IMR-90 (cell line): ENCODE measurements at regions of chr14 and their contacts with region 1.

Region 1: DNA sequence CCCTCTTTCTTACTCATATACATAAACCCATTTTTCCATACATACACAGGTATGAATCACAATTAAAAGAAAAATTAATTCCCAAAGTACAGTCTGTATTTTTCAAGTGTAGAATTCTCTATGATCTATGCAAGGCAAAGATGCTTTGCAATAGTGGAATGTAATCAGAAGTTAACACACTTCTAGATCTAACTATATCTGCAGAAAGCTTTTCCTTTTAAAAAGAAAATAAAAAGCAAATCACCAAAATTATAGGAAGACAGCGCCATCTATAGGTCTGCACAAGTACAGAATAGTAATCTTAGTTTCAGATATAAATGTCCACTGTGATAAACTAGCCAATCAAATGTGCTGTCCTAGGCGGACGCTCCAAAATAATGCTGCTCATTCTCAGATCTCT is 22.0 kb downstream of the SLC25A21 start:
- DNase-seq: peak; percentile 58
- ATAC-seq: peak; percentile 87
- H3K4me3 ChIP-seq: no peak overlapping the region
- H3K27ac ChIP-seq: no peak overlapping the region
- H3K4me1 ChIP-seq: no peaks in the 10 kb centered on the region
- H3K27me3 ChIP-seq: peaks cover 4% of the 10 kb centered on the region; the same call in 1 of the 2 replicates
- CTCF ChIP-seq: peak; percentile 82
- POLR2A ChIP-seq: no peak
- RAD21 ChIP-seq: peak; percentile 62

Region 2: DNA sequence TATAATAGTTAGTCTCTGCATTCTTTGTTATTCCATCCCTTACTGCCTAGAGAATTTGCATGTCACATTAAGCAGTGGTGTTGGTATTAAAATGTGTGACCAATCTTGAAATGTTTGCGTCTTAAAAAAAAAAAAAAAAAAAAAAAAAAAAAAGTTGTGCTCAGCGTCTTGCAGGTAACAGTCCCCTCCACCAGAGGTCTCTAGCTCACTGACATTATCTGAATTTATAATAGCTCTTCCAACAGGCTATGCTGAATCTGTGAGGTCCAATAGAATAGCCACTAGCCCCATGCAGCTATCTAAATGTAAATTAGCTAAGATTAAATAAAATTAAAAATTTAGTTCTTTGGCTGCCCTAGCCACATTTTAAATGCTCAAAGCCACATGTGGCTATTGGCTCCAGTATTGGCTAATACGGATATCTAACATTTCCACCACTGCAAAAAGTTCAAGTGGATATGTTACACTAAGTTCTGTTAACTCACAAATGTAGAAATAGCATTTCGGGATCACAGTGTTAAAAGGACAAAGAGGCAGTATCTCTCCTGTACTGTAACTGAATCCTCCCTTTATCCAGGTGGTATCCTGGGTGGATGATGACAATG is 596.7 kb before region 1 on chr14:
- CTCF ChIA-PET with region 1: interaction called, 24 read pairs
- POLR2A ChIA-PET with region 1: interaction called, 12 read pairs
- dilution Hi-C with region 1: no loop called
- in situ Hi-C with region 1: no loop called
- intact Hi-C with region 1: loop called (anchors 1 kb)
- DNase-seq: peak; percentile 51
- ATAC-seq: peak; percentile 90
- H3K4me3 ChIP-seq: no peak overlapping the region
- H3K27ac ChIP-seq: no peak overlapping the region
- H3K4me1 ChIP-seq: no peaks in the 10 kb centered on the region
- H3K27me3 ChIP-seq: no peaks in the 10 kb centered on the region; the same call in 1 of the 2 replicates
- CTCF ChIP-seq: peak; percentile 81
- POLR2A ChIP-seq: no peak
- RAD21 ChIP-seq: peak; percentile 62

Region 3: DNA sequence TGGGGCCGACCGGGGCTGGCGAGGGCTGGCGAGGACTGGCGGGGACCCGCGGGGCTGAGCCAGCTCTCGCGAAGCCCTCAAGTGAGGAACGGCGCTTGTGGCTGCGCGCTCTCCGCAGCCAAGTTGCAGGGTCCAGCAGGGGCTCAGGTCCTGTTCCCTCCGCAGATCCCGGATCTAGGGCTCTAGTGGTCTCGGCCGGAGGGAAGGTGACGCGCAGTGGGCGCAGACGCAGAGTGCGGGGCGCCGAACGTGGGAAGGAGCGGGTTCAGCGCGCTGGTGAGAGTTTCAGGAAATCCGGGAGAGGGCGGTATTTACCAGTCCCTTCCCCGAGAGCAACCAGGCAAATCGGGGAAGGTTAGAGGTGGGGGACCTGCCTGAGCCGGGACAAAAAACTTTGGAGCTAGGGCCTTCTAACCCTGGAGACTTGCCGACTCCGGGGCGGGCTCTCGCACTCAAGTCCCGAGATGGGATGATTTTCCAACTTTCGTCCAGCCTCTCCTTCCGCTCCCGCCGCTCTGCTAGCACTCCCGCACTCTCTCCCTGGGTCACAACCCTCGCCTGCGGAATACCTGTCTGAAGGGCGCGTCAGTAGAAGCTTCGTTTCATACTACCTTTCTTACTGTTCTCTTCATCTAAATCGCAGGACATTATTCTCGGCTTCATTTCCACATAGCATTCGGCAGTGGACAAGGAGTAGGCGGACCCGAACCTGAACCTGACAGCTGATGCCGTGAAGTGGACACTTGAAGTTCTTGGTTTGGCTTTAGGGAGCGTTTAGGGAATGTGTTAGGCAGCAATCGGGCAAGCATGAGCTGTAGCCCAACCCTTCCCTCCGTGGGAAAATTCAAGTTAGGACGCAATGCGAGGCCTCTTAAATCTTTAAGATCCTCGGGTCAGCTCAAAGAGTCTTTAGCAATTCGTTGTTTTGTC is 502.3 kb before region 1 on chr14:
- CTCF ChIA-PET with region 1: interaction called, 12 read pairs
- POLR2A ChIA-PET with region 1: no interaction called
- dilution Hi-C with region 1: no loop called
- in situ Hi-C with region 1: loop called (anchors 10 kb)
- intact Hi-C with region 1: loop called (anchors 1 kb)
- DNase-seq: peak; percentile 30
- ATAC-seq: peak; percentile 91
- H3K4me3 ChIP-seq: peak overlapping the region; percentile 42
- H3K27ac ChIP-seq: no peak overlapping the region
- H3K4me1 ChIP-seq: 0 out of 2 replicates have a peak, but pooled peaks cover 4% of the 10 kb centered on the region
- H3K27me3 ChIP-seq: peaks cover 58% of the 10 kb centered on the region
- CTCF ChIP-seq: peak; percentile 60
- POLR2A ChIP-seq: no peak
- RAD21 ChIP-seq: peak; percentile 60

Region 4: DNA sequence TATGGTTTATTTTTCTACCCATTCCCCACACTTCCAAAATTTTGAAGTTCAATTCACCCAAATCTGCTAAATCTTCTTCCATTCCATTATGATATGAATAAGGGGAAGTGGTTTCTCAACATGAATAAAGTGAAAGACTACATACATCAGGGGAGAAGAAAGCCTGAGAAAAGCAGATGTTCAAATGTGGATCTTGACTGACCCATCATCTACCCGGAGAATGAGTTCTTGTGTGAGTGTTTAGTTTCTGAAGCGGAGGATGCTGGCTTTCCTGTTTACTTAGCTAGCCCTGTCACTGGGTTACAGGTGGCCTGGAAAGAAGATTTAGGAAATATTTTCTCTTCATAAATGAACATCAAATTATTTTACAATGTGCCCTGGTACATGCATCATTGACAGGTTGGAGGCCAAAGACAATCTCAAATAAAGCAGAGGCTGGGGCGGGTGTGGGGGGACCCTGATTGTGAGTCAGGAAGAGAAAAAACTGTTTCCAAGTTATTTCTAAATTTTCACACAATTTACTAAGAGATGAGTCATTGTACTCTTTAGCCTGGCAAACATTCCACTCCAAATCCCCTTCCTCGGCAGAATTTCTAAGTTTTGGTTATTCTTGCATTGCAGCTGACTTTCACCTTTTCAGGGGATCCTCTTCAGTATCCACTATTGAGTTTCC is 113.6 kb before region 1 on chr14:
- CTCF ChIA-PET with region 1: no interaction called
- POLR2A ChIA-PET with region 1: no interaction called
- dilution Hi-C with region 1: no loop called
- in situ Hi-C with region 1: no loop called
- intact Hi-C with region 1: no loop called
- DNase-seq: peak; percentile 41
- ATAC-seq: peak; percentile 65
- H3K4me3 ChIP-seq: no peak overlapping the region
- H3K27ac ChIP-seq: no peak overlapping the region
- H3K4me1 ChIP-seq: peaks cover 3% of the 10 kb centered on the region; the same call in 1 of the 2 replicates
- H3K27me3 ChIP-seq: no peaks in the 10 kb centered on the region
- CTCF ChIP-seq: no peak
- POLR2A ChIP-seq: no peak
- RAD21 ChIP-seq: no peak

Region 5: GRCh38 chr14:37122254-37122653 is 28.2 kb before region 1 on chr14:
- CTCF ChIA-PET with region 1: interaction called, 7 read pairs
- POLR2A ChIA-PET with region 1: no interaction called
- dilution Hi-C with region 1: no loop called
- in situ Hi-C with region 1: no loop called
- intact Hi-C with region 1: loop called (anchors 2 kb)
- DNase-seq: peak; percentile 85
- ATAC-seq: peak; percentile 87
- H3K4me3 ChIP-seq: no peak overlapping the region
- H3K27ac ChIP-seq: no peak overlapping the region
- H3K4me1 ChIP-seq: peaks cover 2% of the 10 kb centered on the region; the same call in 1 of the 2 replicates
- H3K27me3 ChIP-seq: no peaks in the 10 kb centered on the region
- CTCF ChIP-seq: no peak
- POLR2A ChIP-seq: no peak
- RAD21 ChIP-seq: no peak

Region 6: DNA sequence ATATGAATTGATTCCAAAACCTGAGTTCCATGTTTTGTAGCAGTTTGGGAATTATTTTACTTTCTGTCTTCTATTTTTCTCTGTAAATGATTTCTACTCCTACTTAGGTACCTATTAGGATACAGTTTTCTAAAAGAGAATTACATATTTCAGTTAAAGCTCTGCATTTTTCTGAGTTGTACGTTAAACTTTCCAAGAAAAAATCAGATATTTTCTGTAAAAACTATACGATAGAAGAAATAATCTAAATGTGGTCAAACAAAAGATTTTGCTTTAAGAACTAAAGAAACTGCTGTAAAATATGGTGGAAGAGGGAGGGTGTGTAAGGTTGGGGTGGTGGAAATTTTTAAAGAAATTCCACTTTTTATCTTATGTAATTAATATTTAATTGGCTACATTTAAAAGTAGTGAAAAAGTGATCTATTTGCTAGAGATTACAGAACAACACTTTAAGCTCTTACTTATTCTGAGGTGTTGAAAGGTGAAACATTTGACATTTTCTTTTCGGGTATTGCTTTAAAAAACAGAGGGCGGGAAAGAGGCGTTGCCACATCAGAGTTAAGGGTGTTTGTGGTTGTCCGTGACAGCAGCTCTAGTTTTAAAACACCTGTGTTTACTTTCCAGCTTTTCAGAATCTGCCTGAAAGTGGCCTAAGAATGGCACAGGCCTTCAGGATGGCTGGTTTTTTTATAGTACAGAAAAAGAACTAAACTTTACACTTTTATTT is 234.6 kb after region 1 on chr14:
- CTCF ChIA-PET with region 1: no interaction called
- POLR2A ChIA-PET with region 1: no interaction called
- dilution Hi-C with region 1: no loop called
- in situ Hi-C with region 1: no loop called
- intact Hi-C with region 1: no loop called
- DNase-seq: no peak
- ATAC-seq: no peak
- H3K4me3 ChIP-seq: no peak overlapping the region
- H3K27ac ChIP-seq: no peak overlapping the region
- H3K4me1 ChIP-seq: no peaks in the 10 kb centered on the region
- H3K27me3 ChIP-seq: no peaks in the 10 kb centered on the region
- CTCF ChIP-seq: no peak
- POLR2A ChIP-seq: no peak
- RAD21 ChIP-seq: no peak